Upper lobe of right lung (tissue), 1 donor: ENCODE measurements at regions of chr7 and their contacts with region 1.

Region 1: GRCh38 chr7:116525913-116526861 is 1.4 kb downstream of the CAV1 start:
- DNase-seq: peak; percentile 90
- ATAC-seq: peak; percentile 88
- H3K4me3 ChIP-seq: peak overlapping the region; percentile 68
- H3K27ac ChIP-seq: peak overlapping the region; percentile 90
- H3K4me1 ChIP-seq: peaks cover 11% of the 10 kb centered on the region
- H3K27me3 ChIP-seq: no peaks in the 10 kb centered on the region
- CTCF ChIP-seq: peak; percentile 86

Region 2: GRCh38 chr7:116258734-116259133 is 267.5 kb before region 1 on chr7:
- intact Hi-C with region 1: loop called (anchors 10 kb)
- DNase-seq: no peak
- ATAC-seq: peak; percentile 82
- H3K4me3 ChIP-seq: no peak overlapping the region
- H3K27ac ChIP-seq: no peak overlapping the region
- H3K4me1 ChIP-seq: no peaks in the 10 kb centered on the region
- H3K27me3 ChIP-seq: no peaks in the 10 kb centered on the region
- CTCF ChIP-seq: peak; percentile 77

Region 3: DNA sequence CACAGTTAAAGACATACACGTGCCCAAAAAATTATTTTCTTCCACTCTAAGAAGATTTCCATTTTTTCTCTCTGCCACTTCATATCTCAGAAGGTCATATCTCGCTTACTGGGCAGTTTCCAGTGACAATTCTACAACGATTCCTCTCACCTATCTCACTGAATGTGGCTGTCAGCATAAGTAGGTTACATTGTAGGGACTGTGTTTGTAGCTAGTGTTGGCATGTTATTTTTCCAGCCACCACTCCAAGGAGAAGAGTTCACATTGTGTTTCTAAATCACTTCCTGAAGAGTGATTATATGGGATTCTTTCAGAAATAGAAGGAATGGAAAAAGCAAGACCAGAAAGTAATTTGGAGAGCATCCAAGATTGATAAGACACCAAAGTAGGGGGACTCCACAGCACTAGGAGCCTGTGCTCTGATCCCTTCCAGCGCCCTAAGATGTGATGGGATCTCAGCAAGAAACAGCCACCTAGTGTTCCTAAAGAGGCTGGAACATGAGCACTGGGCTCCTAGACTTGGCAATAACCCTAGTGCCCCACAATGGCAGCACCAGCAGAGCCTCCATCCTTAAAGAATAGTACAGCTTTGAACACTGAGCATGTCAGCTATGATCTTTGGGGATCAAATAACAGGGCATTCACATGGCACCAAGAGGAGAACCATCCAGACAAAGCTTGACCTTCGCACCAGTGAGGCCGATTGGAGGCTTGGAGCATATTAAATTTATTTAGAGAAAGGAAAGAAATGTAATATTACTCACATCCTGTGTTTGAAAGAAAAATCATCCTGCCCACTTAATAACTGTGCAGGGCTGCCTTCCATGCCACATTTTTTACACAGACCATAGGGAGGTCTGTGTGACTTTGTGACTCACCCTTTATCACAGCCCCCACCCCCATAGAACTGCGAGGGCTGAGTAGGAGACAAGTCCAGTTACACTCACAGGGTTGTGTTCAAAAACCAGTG is 50.4 kb after region 1 on chr7:
- intact Hi-C with region 1: loop called (anchors 10 kb)
- DNase-seq: no peak
- ATAC-seq: peak; percentile 51
- H3K4me3 ChIP-seq: no peak overlapping the region
- H3K27ac ChIP-seq: no peak overlapping the region
- H3K4me1 ChIP-seq: peaks cover 16% of the 10 kb centered on the region
- H3K27me3 ChIP-seq: no peaks in the 10 kb centered on the region
- CTCF ChIP-seq: no peak